Left ventricle myocardium inferior (tissue), 1 donor: ENCODE measurements at regions of chr6 and their contacts with region 1.

Region 1: DNA sequence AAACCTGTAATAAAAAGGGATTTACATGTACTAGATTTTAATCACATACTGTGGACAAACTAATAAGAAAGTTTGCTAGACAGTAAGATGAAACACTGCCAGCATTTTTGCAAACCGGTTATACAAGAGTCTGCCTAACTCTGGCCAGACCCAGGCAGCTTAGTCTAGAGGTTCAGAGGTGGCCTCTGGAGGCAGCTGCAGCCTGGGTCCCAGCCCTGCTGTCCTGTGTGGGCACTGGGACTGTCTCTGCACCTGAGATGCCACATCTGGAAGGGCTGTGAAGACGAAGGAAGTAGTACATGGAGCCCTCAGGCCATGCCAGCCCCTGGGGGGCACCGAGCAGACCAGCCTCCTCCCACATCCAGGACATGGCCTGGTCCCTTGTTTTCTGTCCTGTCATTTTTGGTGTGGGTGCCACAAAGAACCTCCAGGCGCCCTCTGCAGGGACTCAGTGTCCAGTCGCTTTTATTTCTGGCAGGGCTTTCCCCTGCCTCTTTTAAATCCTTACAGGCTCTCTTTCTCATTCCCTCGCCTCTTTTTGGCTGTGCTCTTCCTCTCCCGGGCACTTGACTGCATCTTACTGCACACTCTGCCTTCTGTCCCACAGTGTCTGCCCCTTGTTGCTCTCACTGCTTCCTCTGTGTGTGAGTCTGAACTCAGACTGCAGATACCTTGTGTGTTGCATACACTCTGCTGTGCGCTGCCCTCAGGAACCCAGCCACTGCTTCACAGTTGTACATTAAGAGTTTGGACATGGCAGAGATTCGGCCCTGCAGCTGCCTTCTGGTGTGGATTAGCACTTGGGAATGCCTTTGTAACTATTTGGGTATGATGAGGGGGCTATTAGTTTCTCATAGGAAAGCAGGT is 216.7 kb downstream of the ZDHHC14 start:
- DNase-seq: peak; percentile 36
- H3K4me3 ChIP-seq: no peak overlapping the region
- H3K27ac ChIP-seq: no peak overlapping the region
- H3K4me1 ChIP-seq: peaks cover 8% of the 10 kb centered on the region
- H3K27me3 ChIP-seq: no peaks in the 10 kb centered on the region
- CTCF ChIP-seq: peak; percentile 64

Region 2: GRCh38 chr6:157314705-157315321 is 282.9 kb before region 1 on chr6:
- intact Hi-C with region 1: loop called (anchors 10 kb)
- DNase-seq: no peak
- H3K4me3 ChIP-seq: no peak overlapping the region
- H3K27ac ChIP-seq: peak overlapping the region; percentile 4
- H3K4me1 ChIP-seq: peaks cover 25% of the 10 kb centered on the region
- H3K27me3 ChIP-seq: no peaks in the 10 kb centered on the region
- CTCF ChIP-seq: peak; percentile 82

Region 3: GRCh38 chr6:157688960-157689599 is 91.4 kb after region 1 on chr6:
- intact Hi-C with region 1: no loop called
- DNase-seq: no peak
- H3K4me3 ChIP-seq: no peak overlapping the region
- H3K27ac ChIP-seq: no peak overlapping the region
- H3K4me1 ChIP-seq: peaks cover 26% of the 10 kb centered on the region
- H3K27me3 ChIP-seq: no peaks in the 10 kb centered on the region
- CTCF ChIP-seq: no peak